SK-MEL-5 (cell line): ENCODE measurements at regions of chr7 and their contacts with region 1.

Region 1: GRCh38 chr7:108497082-108497725 is 28.7 kb downstream of the PNPLA8 start:
- DNase-seq: peak; percentile 85

Region 2: GRCh38 chr7:108181073-108181985 is 315.9 kb before region 1 on chr7:
- in situ Hi-C with region 1: loop called (anchors 10 kb)
- DNase-seq: peak; percentile 81